Left lung (tissue), 14 donors: ENCODE measurements at regions of chr15 and their contacts with region 1.

Region 1: DNA sequence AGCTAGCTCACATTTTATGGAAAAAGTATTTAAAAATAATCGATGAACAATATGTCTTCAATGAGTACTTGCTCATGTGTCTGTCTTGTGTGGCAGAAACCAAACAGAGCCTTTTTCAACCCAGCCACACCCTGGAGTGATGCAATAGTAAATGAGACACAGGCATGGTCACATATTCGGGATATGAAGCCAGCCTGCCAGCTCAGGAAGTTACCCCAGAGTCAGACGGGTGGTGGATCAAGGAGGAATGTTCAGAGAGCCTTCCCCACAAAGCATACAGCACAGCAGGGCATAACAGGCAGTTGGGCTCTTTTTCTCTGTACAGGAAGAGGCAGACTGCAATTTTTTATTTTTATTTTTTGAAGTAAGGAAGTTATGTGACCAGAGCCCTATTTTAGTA is 27.3 kb downstream of the LARP6 start:
- DNase-seq: peak in 1 of 4 donors; percentile 45
- ATAC-seq: peak; percentile 60
- H3K4me3 ChIP-seq: no peak overlapping the region
- H3K27ac ChIP-seq: no peak overlapping the region
- H3K4me1 ChIP-seq: peaks cover 0 to 23% of the 10 kb centered on the region in 2 donors
- H3K27me3 ChIP-seq: no peaks in the 10 kb centered on the region
- CTCF ChIP-seq: no peak

Region 2: DNA sequence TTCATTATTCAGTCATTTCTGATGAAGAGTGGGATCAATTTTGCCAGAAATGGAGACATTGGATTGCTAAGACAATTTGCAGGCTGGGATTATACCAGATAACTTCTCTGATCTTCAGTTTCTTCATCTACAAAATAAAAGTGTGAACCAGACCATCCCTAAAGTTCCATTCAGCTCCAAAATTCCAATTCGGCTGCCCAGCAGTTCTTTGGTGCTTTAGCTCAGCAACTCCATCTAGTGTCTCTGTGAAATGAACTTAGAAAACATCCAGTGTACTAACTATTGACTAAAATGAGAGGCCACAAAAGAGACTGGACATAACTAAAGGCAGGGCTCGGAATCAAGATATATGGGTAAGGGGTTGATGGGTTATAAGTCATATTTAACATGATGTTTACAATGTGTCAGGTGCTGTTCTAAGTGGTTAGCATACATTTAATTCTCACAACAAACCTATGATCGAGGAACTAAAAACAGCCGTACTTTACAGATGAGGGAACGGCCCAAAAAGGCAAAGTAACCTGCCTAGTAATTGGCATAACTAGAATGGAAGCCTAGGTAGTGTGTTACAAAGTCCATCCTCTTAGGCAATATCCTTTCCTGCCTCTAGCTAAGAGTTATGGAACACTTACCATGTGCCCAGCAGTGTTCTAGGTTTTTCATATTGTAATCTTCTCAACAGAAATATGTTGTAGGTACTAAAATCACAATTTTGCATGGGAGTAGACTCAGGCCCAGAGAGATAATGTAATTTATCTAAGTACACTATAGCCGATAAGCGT is 48.6 kb after region 1 on chr15:
- intact Hi-C with region 1: loop called in 1 of 2 experiments (anchors 10 kb)
- DNase-seq: no peak
- ATAC-seq: peak; percentile 41
- H3K4me3 ChIP-seq: no peak overlapping the region
- H3K27ac ChIP-seq: no peak overlapping the region
- H3K4me1 ChIP-seq: no peaks in the 10 kb centered on the region
- H3K27me3 ChIP-seq: no peaks in the 10 kb centered on the region
- CTCF ChIP-seq: peak in 1 of 2 donors; percentile 24

Region 3: DNA sequence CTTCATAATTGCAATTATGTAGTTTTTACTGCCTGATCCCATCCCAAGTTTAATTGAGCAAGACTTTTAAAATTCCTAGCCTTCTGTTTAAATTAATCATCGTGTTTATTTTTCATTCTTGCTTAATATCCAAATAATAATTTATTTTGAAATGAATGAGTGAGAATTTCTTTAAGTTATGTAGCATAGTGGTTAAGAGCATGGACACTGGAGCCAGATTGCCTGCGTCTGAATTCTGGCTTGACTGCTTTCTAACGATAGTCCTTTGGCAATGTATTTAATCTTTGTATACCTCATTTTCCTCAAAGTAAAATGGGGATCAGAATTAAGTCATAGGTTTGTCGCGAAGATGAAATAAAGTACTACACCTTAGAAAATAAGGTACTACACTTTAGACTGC is 137.4 kb after region 1 on chr15:
- intact Hi-C with region 1: no loop called
- DNase-seq: no peak
- ATAC-seq: no peak
- H3K4me3 ChIP-seq: no peak overlapping the region
- H3K27ac ChIP-seq: no peak overlapping the region
- H3K4me1 ChIP-seq: no peaks in the 10 kb centered on the region
- H3K27me3 ChIP-seq: no peaks in the 10 kb centered on the region
- CTCF ChIP-seq: no peak

Region 4: DNA sequence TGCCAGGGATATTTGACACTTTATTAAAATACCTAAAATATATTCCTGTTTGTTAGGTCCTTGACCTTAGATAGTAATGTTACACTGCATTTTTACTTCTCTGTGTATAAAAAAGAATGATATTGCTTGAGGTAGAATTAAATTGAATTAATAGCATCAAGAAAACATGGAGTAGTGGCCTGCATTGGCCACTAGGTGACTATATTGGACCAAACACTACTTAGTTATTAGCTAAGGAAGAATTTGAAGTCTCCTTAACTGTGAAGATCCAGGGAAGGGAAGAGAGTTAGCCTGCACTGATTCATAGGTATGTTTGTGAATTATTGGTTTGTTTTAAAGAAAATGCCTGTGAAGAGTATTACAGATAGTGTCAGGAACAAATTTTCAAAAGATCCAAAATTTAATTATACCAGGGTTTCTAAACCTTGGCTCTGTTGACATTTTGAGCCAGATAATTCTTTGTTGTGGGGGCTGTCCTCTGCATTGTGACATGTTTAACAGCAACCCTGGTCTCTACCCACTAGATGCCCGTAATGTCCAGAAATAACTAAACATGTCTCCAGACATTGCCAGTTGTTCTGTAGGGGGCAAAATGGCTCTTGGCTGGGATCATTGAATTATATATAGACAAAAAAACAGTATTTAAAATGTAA is 185.0 kb after region 1 on chr15:
- intact Hi-C with region 1: no loop called
- DNase-seq: peak in 2 of 4 donors; percentile 20 to 51
- ATAC-seq: peak; percentile 93
- H3K4me3 ChIP-seq: no peak overlapping the region
- H3K27ac ChIP-seq: no peak overlapping the region
- H3K4me1 ChIP-seq: no peaks in the 10 kb centered on the region
- H3K27me3 ChIP-seq: no peaks in the 10 kb centered on the region
- CTCF ChIP-seq: peak; percentile 54 to 76